ENCODE measurements at regions of chr1 and their contacts with region 1.

Region 1: DNA sequence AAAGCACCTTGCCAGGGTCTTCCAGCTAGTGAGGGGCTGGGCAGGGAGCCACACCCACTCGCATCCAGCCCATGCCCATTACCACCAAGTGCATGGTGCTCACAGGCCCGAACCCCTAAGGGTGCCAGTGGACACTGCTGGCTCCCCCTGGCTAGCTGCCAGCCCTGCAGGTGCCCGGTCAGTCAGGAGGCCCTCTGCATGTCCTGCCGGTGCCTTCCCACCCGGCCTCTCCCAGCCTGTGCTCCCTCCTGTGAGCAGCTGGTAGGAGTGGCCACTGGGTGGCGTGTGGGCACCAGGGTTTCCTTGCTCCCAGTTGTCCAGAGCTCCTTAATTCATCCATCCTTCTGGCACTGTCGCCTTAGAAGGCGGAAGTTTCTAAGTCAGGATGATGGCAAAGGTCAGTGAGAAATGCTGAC is 33.4 kb downstream of the QSOX1 start:
- DNase-seq: peak; percentile 79 to 82
- ATAC-seq: peak; percentile 88 to 98
- H3K4me3 ChIP-seq: no peak overlapping the region
- H3K27ac ChIP-seq: no peak overlapping the region
- H3K4me1 ChIP-seq: no peaks in the 10 kb centered on the region
- CTCF ChIP-seq: peak; percentile 86
- EP300 ChIP-seq: no peak
- POLR2A ChIP-seq: no peak
- RAD21 ChIP-seq: peak; percentile 87 to 93

Region 2: DNA sequence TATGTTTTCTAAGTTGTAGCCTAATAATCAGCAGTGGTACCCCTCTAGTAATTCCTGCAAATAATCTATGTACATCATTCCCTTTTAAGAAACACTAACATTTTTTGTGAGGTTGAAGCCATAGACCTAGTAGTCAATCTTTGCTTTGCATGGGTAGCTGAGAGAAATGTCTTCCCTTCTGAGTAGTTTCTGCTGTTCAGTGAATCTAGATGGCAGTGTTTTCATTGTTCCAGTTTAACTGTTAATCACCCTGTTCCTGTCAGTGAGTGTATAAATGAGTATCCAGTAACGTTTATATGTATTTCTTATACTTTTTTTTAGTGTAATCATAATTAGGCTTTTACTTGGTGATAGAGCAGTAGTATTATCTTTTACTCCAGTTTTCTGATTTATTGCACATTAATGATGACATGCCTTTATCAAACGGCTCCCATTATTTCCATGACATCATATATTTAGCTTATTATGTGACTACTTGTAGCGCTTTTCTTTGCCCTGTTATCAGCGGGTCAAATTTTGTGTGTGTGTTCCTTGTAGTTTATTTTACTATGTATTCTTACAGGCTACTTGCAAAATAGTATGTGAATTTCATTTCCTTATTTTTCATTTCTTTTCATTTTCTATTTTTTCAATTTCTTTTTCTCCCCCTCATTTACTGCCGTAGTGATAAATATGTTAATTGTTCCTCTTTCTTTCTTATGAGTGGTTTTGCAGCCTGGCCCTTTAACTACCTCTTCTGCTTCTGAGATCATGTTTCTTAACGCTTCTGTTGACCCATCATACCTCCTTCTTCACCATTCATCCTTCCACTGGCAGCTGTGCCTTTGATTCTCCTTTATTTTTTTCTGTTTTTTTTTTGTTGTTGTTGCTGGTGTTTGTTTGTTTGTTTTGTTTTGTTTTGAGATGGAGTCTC is 214.6 kb before region 1 on chr1:
- CTCF ChIA-PET with region 1: no interaction called
- POLR2A ChIA-PET with region 1: no interaction called
- DNase-seq: no peak
- ATAC-seq: no peak
- H3K4me3 ChIP-seq: no peak overlapping the region
- H3K27ac ChIP-seq: no peak overlapping the region
- H3K4me1 ChIP-seq: 0 out of 3 replicates have a peak, but pooled peaks cover 7% of the 10 kb centered on the region
- CTCF ChIP-seq: no peak
- EP300 ChIP-seq: no peak
- POLR2A ChIP-seq: no peak
- RAD21 ChIP-seq: no peak

Region 3: GRCh38 chr1:180198196-180198595 is 10.1 kb after region 1 on chr1:
- CTCF ChIA-PET with region 1: interaction called, 77 read pairs
- POLR2A ChIA-PET with region 1: no interaction called
- DNase-seq: no peak
- ATAC-seq: no peak
- H3K4me3 ChIP-seq: no peak overlapping the region
- H3K27ac ChIP-seq: no peak overlapping the region
- H3K4me1 ChIP-seq: no peaks in the 10 kb centered on the region
- CTCF ChIP-seq: no peak
- EP300 ChIP-seq: no peak
- POLR2A ChIP-seq: no peak
- RAD21 ChIP-seq: no peak

Region 4: DNA sequence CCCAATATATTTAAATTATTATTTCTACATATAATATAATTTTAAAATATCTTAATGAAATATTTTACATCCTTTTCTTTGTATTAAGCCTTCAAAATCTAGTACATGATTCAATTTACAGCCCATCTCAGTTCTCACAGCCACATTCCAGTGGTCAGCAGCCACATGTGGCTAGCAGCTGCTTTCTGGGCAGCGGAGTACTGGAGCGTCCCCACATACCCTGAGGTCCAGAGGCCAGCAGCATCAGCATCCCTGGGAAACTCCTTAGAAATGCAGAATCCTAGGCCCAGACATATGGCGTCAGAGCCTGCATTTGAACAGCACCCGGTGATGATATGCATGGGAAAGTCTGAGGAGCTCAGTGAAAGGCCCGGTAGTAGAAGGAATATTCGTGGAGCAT is 33.4 kb after region 1 on chr1:
- CTCF ChIA-PET with region 1: interaction called, 24 read pairs
- POLR2A ChIA-PET with region 1: no interaction called
- DNase-seq: no peak
- ATAC-seq: no peak
- H3K4me3 ChIP-seq: no peak overlapping the region
- H3K27ac ChIP-seq: no peak overlapping the region
- H3K4me1 ChIP-seq: no peaks in the 10 kb centered on the region
- CTCF ChIP-seq: no peak
- EP300 ChIP-seq: no peak
- POLR2A ChIP-seq: no peak
- RAD21 ChIP-seq: no peak

Region 5: DNA sequence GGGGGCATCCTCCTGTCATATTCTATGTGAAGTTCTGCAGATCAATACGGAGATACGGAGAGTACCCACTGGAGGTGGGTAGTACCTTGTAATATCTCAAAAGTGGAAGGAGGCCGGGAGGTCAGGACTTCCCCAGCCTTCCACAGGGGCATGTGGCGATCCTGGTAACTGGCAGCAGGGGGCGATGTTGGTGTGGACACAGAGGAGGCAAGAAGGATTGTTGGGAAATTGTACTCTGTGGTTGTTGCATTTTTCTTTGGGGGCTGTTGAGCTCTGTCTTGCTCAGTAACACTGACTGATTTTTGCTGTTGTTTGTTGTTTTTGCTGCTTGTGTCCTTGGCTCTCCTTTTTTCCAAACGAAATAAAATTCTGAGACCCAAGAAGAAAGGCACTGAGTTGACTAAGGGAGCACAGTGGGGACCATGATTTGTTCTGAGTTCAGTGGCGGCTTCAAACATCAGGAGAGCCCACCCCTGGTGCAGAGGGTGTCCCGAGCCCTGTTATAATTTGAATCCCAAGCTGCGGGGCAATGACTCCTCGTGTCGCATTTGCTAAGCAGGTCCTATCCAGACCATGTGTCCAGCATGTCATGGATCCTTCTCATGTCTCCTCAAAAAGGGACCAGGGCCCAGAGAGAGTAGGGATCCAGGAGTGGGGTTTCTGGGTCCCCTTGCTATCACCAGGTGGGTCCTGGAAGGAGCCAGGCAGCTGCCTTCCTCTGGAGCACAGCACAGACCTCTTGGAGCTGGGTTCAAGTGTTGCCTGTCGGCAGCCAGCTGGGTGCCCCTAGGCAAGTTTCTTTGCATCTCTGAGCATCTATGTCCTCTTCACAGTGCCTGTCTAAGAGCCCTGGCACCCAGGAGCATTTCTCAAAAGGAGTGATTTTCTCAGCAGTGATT is 64.8 kb after region 1 on chr1:
- CTCF ChIA-PET with region 1: interaction called, 16 read pairs
- POLR2A ChIA-PET with region 1: no interaction called
- DNase-seq: peak; percentile 71 to 76
- ATAC-seq: peak; percentile 49 to 84; a peak in 5 of 6 replicates
- H3K4me3 ChIP-seq: no peak overlapping the region
- H3K27ac ChIP-seq: no peak overlapping the region
- H3K4me1 ChIP-seq: no peaks in the 10 kb centered on the region
- CTCF ChIP-seq: peak; percentile 87
- EP300 ChIP-seq: no peak
- POLR2A ChIP-seq: no peak
- RAD21 ChIP-seq: peak; percentile 89 to 95

Region 6: GRCh38 chr1:180482425-180483275 is 294.6 kb after region 1 on chr1:
- CTCF ChIA-PET with region 1: interaction called, 48 read pairs
- POLR2A ChIA-PET with region 1: no interaction called
- DNase-seq: peak; percentile 39 to 62
- ATAC-seq: peak; percentile 51 to 78; a peak in 4 of 6 replicates
- H3K4me3 ChIP-seq: no peak overlapping the region
- H3K27ac ChIP-seq: no peak overlapping the region
- H3K4me1 ChIP-seq: peaks cover 5% of the 10 kb centered on the region; the same call in 1 of the 3 replicates
- CTCF ChIP-seq: peak; percentile 84
- EP300 ChIP-seq: no peak
- POLR2A ChIP-seq: no peak
- RAD21 ChIP-seq: peak; percentile 52 to 57